ENCODE measurements at regions of chr19 and their contacts with region 1.

Region 1: GRCh38 chr19:45770192-45771101 is 1.4 kb upstream of the SIX5 start:
- DNase-seq: peak; percentile 95 to 96
- ATAC-seq: peak; percentile 71 to 82 (median 78)
- H3K4me3 ChIP-seq: peak overlapping the region; percentile 45 to 94 (median 86)
- H3K27ac ChIP-seq: peak overlapping the region; percentile 80 to 100 (median 94)
- H3K4me1 ChIP-seq: peaks cover 18 to 50% (median 31%) of the 10 kb centered on the region in 9 donors
- H3K27me3 ChIP-seq: peaks cover 0 to 78% (median 0%) of the 10 kb centered on the region in 7 donors
- CTCF ChIP-seq: peak; percentile 95 to 99 (median 96)

Region 2: GRCh38 chr19:45692187-45693105 is 78.0 kb before region 1 on chr19 and contains the start of gene QPCTL:
- intact Hi-C with region 1: loop called in 3 of 10 experiments (anchors 2 to 5 kb)
- DNase-seq: peak; percentile 95 to 97
- ATAC-seq: peak; percentile 92 to 97 (median 95)
- H3K4me3 ChIP-seq: peak within 1 kb of the TSS; percentile 65 to 96 (median 72)
- H3K27ac ChIP-seq: peak within 1 kb of the TSS; percentile 28 to 94 (median 87)
- H3K4me1 ChIP-seq: peaks cover 2 to 18% (median 15%) of the 10 kb centered on the region in 9 donors
- H3K27me3 ChIP-seq: no peaks in the 10 kb centered on the region
- CTCF ChIP-seq: no peak
- total RNA-seq, gene QPCTL: 1.8 to 3.5 (median 2.4) TPM

Region 3: DNA sequence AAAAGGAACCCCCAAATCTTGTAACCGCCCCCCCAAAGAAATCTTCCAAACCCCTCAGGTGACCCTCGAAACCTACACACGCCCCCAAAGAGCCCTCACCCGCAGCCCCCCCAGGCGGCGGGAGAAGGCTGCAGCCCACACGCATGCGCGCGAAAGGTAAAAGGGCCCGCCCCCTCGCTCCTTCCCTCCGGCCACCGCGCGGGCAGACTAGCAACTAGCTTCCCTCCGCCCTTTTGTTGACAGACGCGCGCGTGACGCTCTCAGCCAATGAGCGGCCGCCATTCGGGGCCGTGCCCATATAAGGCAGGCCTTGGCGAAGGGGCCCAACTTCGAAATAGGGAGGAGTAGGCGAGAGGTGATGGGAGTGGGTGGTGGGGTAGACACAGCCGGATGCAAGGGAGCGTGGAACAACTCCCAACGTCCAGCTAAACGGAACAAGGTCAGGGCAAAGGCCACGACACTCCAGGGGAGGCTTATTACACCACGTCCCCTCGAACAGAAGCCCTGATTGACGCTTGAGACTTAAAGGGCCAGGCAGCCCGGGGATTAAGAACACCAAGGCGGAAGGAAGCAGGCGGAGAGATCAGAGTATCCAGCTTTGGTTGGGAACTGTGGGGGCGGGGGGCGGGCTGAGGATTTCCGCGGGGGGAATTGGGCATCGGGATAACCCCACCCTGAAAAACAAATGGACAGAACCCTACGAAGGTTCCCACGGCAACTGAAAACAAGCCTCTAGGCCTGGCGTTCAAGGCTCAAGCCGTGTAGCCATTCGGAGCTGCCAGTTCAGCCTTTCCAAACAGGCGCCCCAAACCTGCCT is 53.1 kb before region 1 on chr19:
- intact Hi-C with region 1: loop called in 6 of 10 experiments (anchors 1 to 5 kb)
- DNase-seq: peak; percentile 99
- ATAC-seq: peak; percentile 97 to 99 (median 98)
- H3K4me3 ChIP-seq: peak overlapping the region; percentile 48 to 87 (median 64)
- H3K27ac ChIP-seq: peak overlapping the region; percentile 74 to 97 (median 94)
- H3K4me1 ChIP-seq: peaks cover 3 to 35% (median 20%) of the 10 kb centered on the region in 9 donors
- H3K27me3 ChIP-seq: no peaks in the 10 kb centered on the region
- CTCF ChIP-seq: peak in 5 of 9 donors; percentile 7 to 41 (median 14)

Region 4: GRCh38 chr19:45730389-45731288 is 39.8 kb before region 1 on chr19 and contains the start of gene FBXO46:
- intact Hi-C with region 1: loop called in 2 of 10 experiments (anchors 1 to 2 kb)
- DNase-seq: peak; percentile 95 to 99
- ATAC-seq: peak; percentile 97 to 99 (median 99)
- H3K4me3 ChIP-seq: peak within 1 kb of the TSS; percentile 43 to 84 (median 78)
- H3K27ac ChIP-seq: peak within 1 kb of the TSS in 8 of 10 donors; percentile 41 to 85 (median 73)
- H3K4me1 ChIP-seq: peaks cover 2 to 28% (median 16%) of the 10 kb centered on the region in 9 donors
- H3K27me3 ChIP-seq: no peaks in the 10 kb centered on the region
- CTCF ChIP-seq: peak in 2 of 9 donors; percentile 10 to 14
- total RNA-seq, gene FBXO46: 5.2 to 13.5 (median 9.1) TPM

Region 5: DNA sequence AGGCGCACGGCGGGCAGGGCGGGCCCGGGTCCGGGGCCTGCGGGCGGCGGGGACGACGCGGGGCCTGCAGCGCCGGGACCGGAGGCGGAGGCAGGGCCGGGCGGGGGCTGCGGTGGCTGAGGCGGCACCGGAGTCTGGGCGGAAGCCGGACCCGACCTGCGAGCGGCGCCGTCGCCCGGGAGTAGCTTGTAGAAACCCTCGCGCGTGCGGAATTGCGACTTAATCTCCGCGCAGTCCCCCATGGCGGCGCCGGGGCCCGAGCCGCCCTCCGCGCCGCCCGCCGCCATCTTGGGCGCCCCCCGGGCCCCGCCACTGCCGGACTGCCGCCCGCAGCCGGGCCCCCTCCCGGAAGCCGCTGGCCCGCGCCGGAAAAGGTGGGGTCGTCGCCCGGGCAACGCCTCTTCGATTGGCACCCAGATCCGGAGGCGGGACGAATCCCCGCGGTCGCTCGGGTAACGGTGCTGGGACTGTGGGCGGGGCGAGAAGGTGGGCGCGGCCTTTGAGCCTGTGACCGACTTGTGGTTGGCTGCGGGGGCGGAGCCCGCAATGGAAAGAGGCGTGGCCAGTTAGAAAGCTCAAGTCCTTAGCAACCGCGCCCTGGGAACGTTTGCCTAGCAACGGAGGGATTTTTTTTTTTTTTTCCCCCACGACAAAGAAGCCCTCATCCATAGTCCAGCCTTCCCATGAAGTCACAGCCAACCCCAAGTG is 22.2 kb after region 1 on chr19 and contains the start of gene DMWD:
- intact Hi-C with region 1: loop called in 3 of 10 experiments (anchors 2 kb)
- DNase-seq: peak; percentile 99 to 100
- ATAC-seq: peak; percentile 94 to 99 (median 98)
- H3K4me3 ChIP-seq: peak within 1 kb of the TSS; percentile 52 to 95 (median 70)
- H3K27ac ChIP-seq: peak within 1 kb of the TSS; percentile 74 to 92 (median 84)
- H3K4me1 ChIP-seq: peaks cover 0 to 44% (median 28%) of the 10 kb centered on the region in 9 donors
- H3K27me3 ChIP-seq: peaks cover 0 to 76% (median 0%) of the 10 kb centered on the region in 7 donors
- CTCF ChIP-seq: peak in 1 of 9 donors; percentile 5
- total RNA-seq, gene DMWD: 54.2 to 78.1 (median 69.3) TPM

Region 6: GRCh38 chr19:45798995-45799517 is 28.6 kb after region 1 on chr19:
- intact Hi-C with region 1: loop called in 5 of 10 experiments (anchors 1 to 2 kb)
- DNase-seq: peak; percentile 60 to 64
- ATAC-seq: peak; percentile 65 to 88 (median 82)
- H3K4me3 ChIP-seq: peak overlapping the region in 1 of 10 donors; percentile 0
- H3K27ac ChIP-seq: peak overlapping the region in 1 of 10 donors; percentile 15
- H3K4me1 ChIP-seq: peaks cover 0 to 10% (median 9%) of the 10 kb centered on the region in 9 donors
- H3K27me3 ChIP-seq: peaks cover 0 to 97% (median 0%) of the 10 kb centered on the region in 7 donors
- CTCF ChIP-seq: peak; percentile 70 to 91 (median 88)

Region 7: GRCh38 chr19:46081928-46082727 is 311.7 kb after region 1 on chr19:
- intact Hi-C with region 1: no loop called
- DNase-seq: no peak
- ATAC-seq: peak in 2 of 8 donors; percentile 41 to 61
- H3K4me3 ChIP-seq: no peak overlapping the region
- H3K27ac ChIP-seq: no peak overlapping the region
- H3K4me1 ChIP-seq: peaks cover 0 to 4% (median 3%) of the 10 kb centered on the region in 9 donors
- H3K27me3 ChIP-seq: peaks cover 5 to 58% (median 50%) of the 10 kb centered on the region in 7 donors
- CTCF ChIP-seq: peak in 8 of 9 donors; percentile 28 to 70 (median 62)

Measured in heart right ventricle (tissue), 16 donors.